Activated naive CD4-positive, alpha-beta T cell treated with anti-CD3 and anti-CD28 coated beads for 36 hours (primary cell): ENCODE measurements at regions of chr7 and their contacts with region 1.

Region 1: GRCh38 chr7:93117852-93118530 is at the start of gene SAMD9:
- DNase-seq: peak; percentile 70
- H3K4me3 Mint-ChIP-seq: peak within 1 kb of the TSS; percentile 71
- H3K27ac Mint-ChIP-seq: peak within 1 kb of the TSS; percentile 65
- H3K4me1 Mint-ChIP-seq: peaks cover 47% of the 10 kb centered on the region
- H3K27me3 Mint-ChIP-seq: no peaks in the 10 kb centered on the region
- total RNA-seq, gene SAMD9: 2.9 to 3.1 TPM

Region 2: GRCh38 chr7:92590711-92591310 is 527.2 kb before region 1 on chr7:
- CTCF ChIA-PET with region 1: no interaction called
- intact Hi-C with region 1: loop called (anchors 5 kb)
- DNase-seq: no peak
- H3K4me3 Mint-ChIP-seq: peak overlapping the region; percentile 86
- H3K27ac Mint-ChIP-seq: no peak overlapping the region
- H3K4me1 Mint-ChIP-seq: peaks cover 39% of the 10 kb centered on the region
- H3K27me3 Mint-ChIP-seq: peaks cover 3% of the 10 kb centered on the region

Region 3: GRCh38 chr7:92854501-92855238 is 263.3 kb before region 1 on chr7:
- CTCF ChIA-PET with region 1: no interaction called
- intact Hi-C with region 1: loop called (anchors 5 kb)
- DNase-seq: peak; percentile 39
- H3K4me3 Mint-ChIP-seq: no peak overlapping the region
- H3K27ac Mint-ChIP-seq: peak overlapping the region; percentile 46
- H3K4me1 Mint-ChIP-seq: peaks cover 16% of the 10 kb centered on the region
- H3K27me3 Mint-ChIP-seq: peaks cover 6% of the 10 kb centered on the region

Region 4: GRCh38 chr7:93036807-93037206 is 81.2 kb before region 1 on chr7:
- CTCF ChIA-PET with region 1: no interaction called
- intact Hi-C with region 1: loop called (anchors 1 kb)
- DNase-seq: peak; percentile 74
- H3K4me3 Mint-ChIP-seq: no peak overlapping the region
- H3K27ac Mint-ChIP-seq: peak overlapping the region; percentile 59
- H3K4me1 Mint-ChIP-seq: peaks cover 22% of the 10 kb centered on the region
- H3K27me3 Mint-ChIP-seq: no peaks in the 10 kb centered on the region

Region 5: DNA sequence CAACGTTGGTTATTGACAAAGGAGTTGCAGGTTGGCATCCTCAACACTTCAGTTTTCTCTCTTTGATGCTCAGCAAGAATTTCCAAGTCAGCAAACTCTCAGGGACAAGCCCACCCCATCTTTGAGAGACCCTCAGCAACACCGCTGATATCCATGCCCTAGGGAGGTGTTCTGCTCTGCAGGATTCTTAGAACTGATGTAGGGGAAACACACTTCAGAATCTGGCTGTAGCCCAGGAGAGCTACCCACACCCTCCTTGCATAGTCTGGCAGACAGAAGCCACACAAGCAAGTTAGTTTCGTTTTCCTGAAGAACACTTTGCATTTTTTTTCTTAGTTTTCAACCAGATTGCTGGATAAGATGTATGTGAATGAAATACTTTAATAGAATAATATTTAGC is 29.4 kb after region 1 on chr7:
- CTCF ChIA-PET with region 1: interaction called, 3 read pairs
- intact Hi-C with region 1: loop called (anchors 1 kb)
- DNase-seq: peak; percentile 54
- H3K4me3 Mint-ChIP-seq: peak overlapping the region; percentile 81
- H3K27ac Mint-ChIP-seq: peak overlapping the region; percentile 43
- H3K4me1 Mint-ChIP-seq: peaks cover 22% of the 10 kb centered on the region
- H3K27me3 Mint-ChIP-seq: no peaks in the 10 kb centered on the region

Region 6: DNA sequence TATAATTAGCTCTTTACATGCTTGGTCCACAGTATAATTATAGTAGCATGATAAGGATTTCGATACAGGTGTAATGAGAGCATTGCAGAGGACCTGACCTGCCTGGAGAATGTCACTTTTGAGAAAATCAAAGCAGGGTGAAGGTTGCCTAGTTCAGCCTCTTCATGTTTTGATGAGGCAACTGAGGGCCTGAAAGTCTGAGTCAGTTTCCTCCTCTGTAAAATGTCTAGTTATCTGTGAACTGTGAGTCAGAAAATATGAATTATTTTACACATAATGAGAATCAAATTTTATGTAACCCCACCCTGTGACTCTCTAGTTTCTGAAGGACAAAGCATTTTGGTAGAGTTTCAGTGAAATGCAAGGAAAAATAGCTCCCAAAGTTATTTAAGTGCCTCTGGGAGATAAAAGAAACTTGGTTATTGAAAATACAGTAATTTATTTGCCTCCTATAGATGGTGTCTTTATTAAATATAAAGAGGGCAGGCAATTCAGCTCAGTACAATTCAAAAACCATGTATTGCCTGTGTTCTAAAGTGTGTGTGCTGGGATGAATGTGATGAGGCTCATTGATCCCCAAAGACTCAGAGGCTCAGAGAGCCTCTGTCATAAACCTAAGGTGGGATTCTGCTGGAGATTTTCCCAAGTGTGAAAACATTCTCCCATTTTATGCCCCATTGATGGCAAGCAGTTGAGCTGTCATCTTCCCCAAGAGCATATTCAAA is 67.5 kb after region 1 on chr7:
- CTCF ChIA-PET with region 1: no interaction called
- intact Hi-C with region 1: loop called (anchors 1 kb)
- DNase-seq: peak; percentile 42
- H3K4me3 Mint-ChIP-seq: no peak overlapping the region
- H3K27ac Mint-ChIP-seq: no peak overlapping the region
- H3K4me1 Mint-ChIP-seq: peaks cover 12% of the 10 kb centered on the region
- H3K27me3 Mint-ChIP-seq: peaks cover 43% of the 10 kb centered on the region